Right cardiac atrium (tissue), 5 donors: ENCODE measurements at regions of chr15 and their contacts with region 1.

Region 1: GRCh38 chr15:32659340-32660155 is 18.0 kb downstream of the SCG5 start:
- DNase-seq: no peak
- ATAC-seq: peak; percentile 22 to 37
- H3K4me3 ChIP-seq: no peak overlapping the region
- H3K27ac ChIP-seq: no peak overlapping the region
- H3K4me1 ChIP-seq: peaks cover 3% of the 10 kb centered on the region
- H3K27me3 ChIP-seq: no peaks in the 10 kb centered on the region

Region 2: GRCh38 chr15:32824777-32825176 is 165.2 kb after region 1 on chr15:
- intact Hi-C with region 1: no loop called
- DNase-seq: no peak
- ATAC-seq: no peak
- H3K4me3 ChIP-seq: no peak overlapping the region
- H3K27ac ChIP-seq: no peak overlapping the region
- H3K4me1 ChIP-seq: no peaks in the 10 kb centered on the region
- H3K27me3 ChIP-seq: peaks cover 2% of the 10 kb centered on the region

Region 3: DNA sequence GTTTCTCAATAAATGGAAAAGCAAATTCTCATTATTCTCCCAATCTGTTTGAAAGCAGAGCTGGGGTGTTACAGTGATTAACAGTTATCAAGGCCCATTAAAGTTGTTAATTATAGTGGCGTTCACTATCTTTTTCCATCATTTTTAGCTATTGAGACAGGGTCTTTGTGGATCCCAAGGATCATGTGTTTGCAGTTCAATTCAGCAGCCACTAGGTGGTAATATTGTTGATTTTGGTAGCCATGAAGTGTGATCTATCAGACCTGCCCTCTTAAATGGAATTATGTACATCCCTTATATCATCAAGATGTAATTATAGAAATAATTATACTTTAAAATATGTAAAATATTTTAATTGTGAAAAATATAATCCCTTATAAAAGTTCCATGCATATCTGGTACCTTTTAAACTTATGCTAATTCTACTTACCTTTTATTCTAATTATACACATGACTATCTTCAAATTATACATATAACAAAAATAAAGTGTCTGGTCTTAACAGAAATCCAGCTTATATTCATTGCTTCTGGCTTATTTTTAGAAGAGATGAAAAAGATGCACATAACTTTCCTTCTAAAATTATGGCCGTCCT is 184.7 kb after region 1 on chr15:
- intact Hi-C with region 1: loop called in 1 of 4 experiments (anchors 5 kb)
- DNase-seq: no peak
- ATAC-seq: no peak
- H3K4me3 ChIP-seq: no peak overlapping the region
- H3K27ac ChIP-seq: no peak overlapping the region
- H3K4me1 ChIP-seq: no peaks in the 10 kb centered on the region
- H3K27me3 ChIP-seq: no peaks in the 10 kb centered on the region

Region 4: GRCh38 chr15:32956006-32956405 is 296.5 kb after region 1 on chr15:
- intact Hi-C with region 1: loop called in 2 of 4 experiments (anchors 10 kb)
- DNase-seq: no peak
- ATAC-seq: peak; percentile 13 to 68
- H3K4me3 ChIP-seq: no peak overlapping the region
- H3K27ac ChIP-seq: no peak overlapping the region
- H3K4me1 ChIP-seq: peaks cover 4% of the 10 kb centered on the region
- H3K27me3 ChIP-seq: no peaks in the 10 kb centered on the region

Region 5: GRCh38 chr15:32994810-32995424 is 335.4 kb after region 1 on chr15:
- intact Hi-C with region 1: loop called in 3 of 4 experiments (anchors 10 kb)
- DNase-seq: no peak
- ATAC-seq: no peak
- H3K4me3 ChIP-seq: no peak overlapping the region
- H3K27ac ChIP-seq: no peak overlapping the region
- H3K4me1 ChIP-seq: no peaks in the 10 kb centered on the region
- H3K27me3 ChIP-seq: no peaks in the 10 kb centered on the region